ENCODE measurements at regions of chr5 and their contacts with region 1.

Region 1: DNA sequence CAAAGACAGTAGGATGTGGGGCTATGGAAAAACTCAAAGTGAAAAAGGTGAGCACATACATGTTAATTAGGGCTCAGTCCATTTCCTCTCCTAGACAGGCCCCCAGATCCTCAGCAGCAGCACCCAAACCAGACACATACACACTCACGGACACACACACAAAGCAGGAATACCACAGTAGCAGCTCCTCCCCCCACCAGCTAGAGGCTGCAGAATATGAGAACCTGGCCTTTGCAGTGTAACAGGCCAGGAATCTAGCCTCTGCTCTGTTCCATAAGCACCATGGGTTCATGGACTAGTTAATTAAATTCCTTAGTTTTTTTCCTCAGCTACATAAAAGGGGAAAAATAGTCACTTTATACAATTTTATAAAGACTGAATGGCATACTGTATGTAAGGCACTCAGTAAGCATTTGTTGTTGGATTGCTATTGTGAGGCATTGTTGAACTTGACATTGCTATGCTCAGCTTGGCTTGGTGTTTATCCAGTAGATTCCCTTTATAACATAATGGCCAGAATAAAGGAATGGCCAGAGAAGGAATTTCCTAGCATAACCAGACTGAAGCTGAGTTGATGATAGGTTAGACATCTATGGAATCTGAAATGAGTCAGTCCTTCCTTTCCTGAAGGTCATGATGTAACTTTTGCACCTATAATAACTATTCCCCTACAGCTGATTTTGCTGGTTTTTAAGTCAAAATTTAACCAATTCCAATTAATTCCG is 186.8 kb downstream of the SEMA5A start:
- DNase-seq: no peak
- ATAC-seq: no peak
- H3K4me3 ChIP-seq: no peak overlapping the region
- H3K27ac ChIP-seq: no peak overlapping the region
- H3K4me1 ChIP-seq: no peaks in the 10 kb centered on the region
- H3K27me3 ChIP-seq: no peaks in the 10 kb centered on the region
- CTCF ChIP-seq: no peak
- POLR2A ChIP-seq: no peak

Region 2: GRCh38 chr5:9288234-9288633 is 70.9 kb before region 1 on chr5:
- intact Hi-C with region 1: no loop called
- DNase-seq: no peak
- ATAC-seq: no peak
- H3K4me3 ChIP-seq: no peak overlapping the region
- H3K27ac ChIP-seq: no peak overlapping the region
- H3K4me1 ChIP-seq: no peaks in the 10 kb centered on the region
- H3K27me3 ChIP-seq: no peaks in the 10 kb centered on the region
- CTCF ChIP-seq: no peak
- POLR2A ChIP-seq: no peak

Region 3: GRCh38 chr5:9409413-9410089 is 50.4 kb after region 1 on chr5:
- intact Hi-C with region 1: no loop called
- DNase-seq: peak; percentile 60 to 80 (median 74)
- ATAC-seq: peak; percentile 87
- H3K4me3 ChIP-seq: no peak overlapping the region
- H3K27ac ChIP-seq: peak overlapping the region; percentile 78 to 91 (median 88)
- H3K4me1 ChIP-seq: peaks cover 51% of the 10 kb centered on the region
- H3K27me3 ChIP-seq: no peaks in the 10 kb centered on the region
- CTCF ChIP-seq: no peak
- POLR2A ChIP-seq: peak in 2 of 3 donors; percentile 57 to 82

Region 4: DNA sequence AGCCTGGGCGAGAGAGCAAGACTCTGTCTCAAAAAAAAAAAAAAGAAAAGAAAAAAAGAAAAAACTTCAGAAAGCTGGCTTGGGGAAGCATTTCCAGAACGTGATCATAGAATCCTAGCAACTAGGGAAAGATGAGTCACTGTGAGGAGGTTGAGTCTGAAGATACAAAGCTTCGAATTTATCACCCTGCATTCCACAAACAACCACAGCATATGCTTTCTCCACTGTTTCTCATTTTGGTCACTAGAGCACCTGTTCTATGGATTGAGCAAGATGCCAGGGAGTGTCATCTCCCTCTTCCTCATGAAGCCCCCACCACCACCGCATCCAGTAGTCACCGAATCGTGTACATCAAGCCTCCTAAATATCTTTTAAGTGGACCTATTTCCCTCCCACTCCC is 148.9 kb after region 1 on chr5:
- intact Hi-C with region 1: loop called (anchors 10 kb)
- DNase-seq: no peak
- ATAC-seq: no peak
- H3K4me3 ChIP-seq: no peak overlapping the region
- H3K27ac ChIP-seq: no peak overlapping the region
- H3K4me1 ChIP-seq: peaks cover 6% of the 10 kb centered on the region
- H3K27me3 ChIP-seq: no peaks in the 10 kb centered on the region
- CTCF ChIP-seq: no peak
- POLR2A ChIP-seq: no peak

Region 5: DNA sequence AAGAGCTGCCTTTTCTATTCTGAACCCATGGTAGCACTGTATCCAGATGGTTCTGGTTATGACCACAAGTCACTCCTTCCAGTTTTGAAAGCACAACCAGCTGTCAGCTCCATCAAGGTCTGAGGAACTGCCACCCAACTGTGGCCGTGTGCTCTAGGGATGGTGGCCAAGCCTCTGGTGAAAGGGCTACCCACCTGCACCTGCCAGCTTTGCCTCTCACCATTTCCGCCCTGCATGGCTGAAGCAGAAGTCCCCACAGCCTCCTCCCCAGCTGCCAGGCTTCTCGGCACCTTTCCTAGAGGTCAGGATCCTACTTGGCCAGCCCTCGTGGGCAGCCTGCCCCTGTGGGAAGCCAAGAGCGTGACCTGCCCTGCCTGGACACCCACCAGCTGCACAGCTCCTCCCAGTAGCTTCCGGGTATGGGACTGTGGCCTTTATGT is 169.9 kb after region 1 on chr5:
- intact Hi-C with region 1: no loop called
- DNase-seq: peak; percentile 47 to 73 (median 64)
- ATAC-seq: peak; percentile 87
- H3K4me3 ChIP-seq: no peak overlapping the region
- H3K27ac ChIP-seq: peak overlapping the region; percentile 7 to 58 (median 40)
- H3K4me1 ChIP-seq: peaks cover 7% of the 10 kb centered on the region
- H3K27me3 ChIP-seq: no peaks in the 10 kb centered on the region
- CTCF ChIP-seq: no peak
- POLR2A ChIP-seq: no peak